ENCODE measurements at regions of chr19 and their contacts with region 1.

Region 1: DNA sequence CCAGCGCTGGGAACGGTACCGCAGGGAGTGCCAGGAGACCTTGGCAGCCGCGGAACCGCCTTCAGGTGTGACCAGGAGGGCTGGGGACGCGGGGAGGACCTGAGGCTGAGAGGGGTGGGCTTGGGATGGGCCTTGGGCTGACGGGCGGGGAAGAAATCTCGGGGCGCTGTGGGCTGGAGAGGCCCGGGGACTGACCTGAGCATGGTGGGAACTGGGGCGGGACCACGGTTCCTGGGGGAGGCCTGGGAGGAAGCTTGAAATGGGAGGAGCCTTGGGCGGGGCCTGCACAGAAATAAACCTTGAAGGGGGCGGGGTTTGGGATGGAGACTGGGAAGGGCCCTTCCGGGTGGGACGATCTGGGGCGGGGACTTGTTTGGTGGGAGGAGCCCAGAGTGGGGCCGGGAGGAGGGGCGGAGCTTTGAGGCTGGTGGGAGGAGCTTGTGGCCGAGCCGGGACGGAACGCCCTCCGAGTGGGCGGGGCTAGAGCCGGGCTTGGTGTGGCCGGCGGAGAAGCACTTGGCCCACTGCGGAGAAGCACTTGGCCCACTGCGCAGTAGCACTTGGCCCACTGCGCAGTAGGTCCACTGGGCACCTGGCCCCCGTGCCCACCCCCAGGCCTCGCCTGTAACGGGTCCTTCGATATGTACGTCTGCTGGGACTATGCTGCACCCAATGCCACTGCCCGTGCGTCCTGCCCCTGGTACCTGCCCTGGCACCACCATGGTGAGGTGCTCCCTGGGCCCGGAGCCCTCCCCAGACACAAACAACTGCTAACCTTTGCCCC is 2.8 kb downstream of the GIPR start:
- DNase-seq: peak; percentile 97
- ATAC-seq: peak; percentile 33 to 72
- H3K4me3 ChIP-seq: peak overlapping the region; percentile 39
- H3K27ac ChIP-seq: peak overlapping the region; percentile 60 to 76
- H3K4me1 ChIP-seq: peaks cover 27% of the 10 kb centered on the region
- CTCF ChIP-seq: no peak
- EP300 ChIP-seq: no peak
- POLR2A ChIP-seq: no peak
- RAD21 ChIP-seq: no peak

Region 2: GRCh38 chr19:45657520-45658167 is 13.2 kb before region 1 on chr19:
- CTCF ChIA-PET with region 1: interaction called, 11 read pairs
- POLR2A ChIA-PET with region 1: no interaction called
- DNase-seq: no peak
- ATAC-seq: peak; percentile 8 to 33; a peak in 3 of 6 replicates
- H3K4me3 ChIP-seq: no peak overlapping the region
- H3K27ac ChIP-seq: no peak overlapping the region
- H3K4me1 ChIP-seq: no peaks in the 10 kb centered on the region
- CTCF ChIP-seq: no peak
- EP300 ChIP-seq: no peak
- POLR2A ChIP-seq: no peak
- RAD21 ChIP-seq: no peak

Region 3: GRCh38 chr19:45827459-45828093 is 156.7 kb after region 1 on chr19:
- CTCF ChIA-PET with region 1: no interaction called
- POLR2A ChIA-PET with region 1: no interaction called
- DNase-seq: no peak
- ATAC-seq: peak; percentile 5 to 45; a peak in 3 of 6 replicates
- H3K4me3 ChIP-seq: no peak overlapping the region
- H3K27ac ChIP-seq: no peak overlapping the region
- H3K4me1 ChIP-seq: no peaks in the 10 kb centered on the region
- CTCF ChIP-seq: no peak
- EP300 ChIP-seq: no peak
- POLR2A ChIP-seq: no peak
- RAD21 ChIP-seq: no peak